Activated CD4-positive, alpha-beta T cell treated with anti-CD3 and anti-CD28 coated beads for 36 hours (primary cell): ENCODE measurements at regions of chrX and their contacts with region 1.

Region 1: DNA sequence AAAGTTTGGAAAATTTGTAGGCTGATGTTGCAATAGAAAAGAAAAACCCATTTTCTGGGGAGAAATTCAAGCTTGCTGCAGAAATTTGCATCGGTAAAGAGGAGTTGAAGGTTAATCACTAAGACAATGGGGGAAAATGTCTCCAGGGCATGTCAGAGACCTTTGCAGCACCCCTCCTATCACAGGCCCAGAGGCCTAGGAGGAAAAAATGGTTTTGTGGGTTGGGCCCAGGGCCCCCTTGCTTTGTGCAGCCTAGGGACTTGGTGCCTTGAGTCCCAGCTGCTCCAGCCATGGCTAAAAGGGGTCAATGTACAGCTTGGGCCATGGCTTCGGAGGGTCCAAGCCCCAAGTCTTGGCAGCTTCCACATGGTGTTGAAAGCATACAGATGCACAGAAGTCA is 17.8 kb downstream of the TMSB15A start:
- DNase-seq: no peak
- ATAC-seq: no peak
- H3K4me3 Mint-ChIP-seq: no peak overlapping the region
- H3K27ac Mint-ChIP-seq: no peak overlapping the region
- H3K4me1 Mint-ChIP-seq: no peaks in the 10 kb centered on the region
- H3K27me3 Mint-ChIP-seq: no peaks in the 10 kb centered on the region

Region 2: DNA sequence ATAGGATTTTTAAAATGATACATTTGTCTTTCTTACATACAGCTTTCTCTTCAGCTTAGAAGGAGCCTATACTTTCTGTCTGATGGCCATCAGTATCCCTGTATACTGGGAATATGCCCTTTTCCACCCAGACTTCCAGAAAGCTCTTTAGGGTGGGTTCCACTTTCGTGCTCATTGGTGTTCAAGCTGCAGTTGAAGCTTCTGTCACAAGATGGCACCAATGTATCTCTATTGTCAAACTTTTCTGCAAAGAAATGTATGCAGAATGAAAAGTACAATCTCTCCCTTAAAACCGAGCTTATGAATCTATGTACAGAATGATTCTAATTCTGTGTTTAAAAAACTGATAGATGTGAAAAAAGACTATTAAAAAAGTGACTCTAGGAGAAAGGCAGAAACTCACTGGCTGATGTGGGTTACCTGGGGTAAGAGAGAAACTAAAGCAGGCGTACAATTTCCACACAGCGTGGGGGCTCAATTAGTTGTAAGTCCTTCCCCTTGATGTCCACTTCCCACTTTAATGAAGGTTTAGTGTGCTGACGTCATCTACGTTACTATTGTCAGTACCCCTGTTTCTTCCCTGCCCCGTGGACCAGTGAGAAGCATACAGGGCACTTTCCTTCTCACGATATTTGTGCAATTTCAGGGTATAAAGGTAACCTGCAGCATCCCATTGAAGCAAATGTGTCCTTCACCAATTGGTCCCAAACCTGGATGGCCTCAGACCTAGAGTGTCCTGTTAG is 430.6 kb before region 1 on chrX:
- CTCF ChIA-PET with region 1: no interaction called
- POLR2A ChIA-PET with region 1: no interaction called
- intact Hi-C with region 1: loop called in 1 of 2 experiments (anchors 10 kb)
- DNase-seq: peak; percentile 21
- ATAC-seq: no peak
- H3K4me3 Mint-ChIP-seq: no peak overlapping the region
- H3K27ac Mint-ChIP-seq: no peak overlapping the region
- H3K4me1 Mint-ChIP-seq: no peaks in the 10 kb centered on the region
- H3K27me3 Mint-ChIP-seq: peaks cover 5% of the 10 kb centered on the region

Region 3: DNA sequence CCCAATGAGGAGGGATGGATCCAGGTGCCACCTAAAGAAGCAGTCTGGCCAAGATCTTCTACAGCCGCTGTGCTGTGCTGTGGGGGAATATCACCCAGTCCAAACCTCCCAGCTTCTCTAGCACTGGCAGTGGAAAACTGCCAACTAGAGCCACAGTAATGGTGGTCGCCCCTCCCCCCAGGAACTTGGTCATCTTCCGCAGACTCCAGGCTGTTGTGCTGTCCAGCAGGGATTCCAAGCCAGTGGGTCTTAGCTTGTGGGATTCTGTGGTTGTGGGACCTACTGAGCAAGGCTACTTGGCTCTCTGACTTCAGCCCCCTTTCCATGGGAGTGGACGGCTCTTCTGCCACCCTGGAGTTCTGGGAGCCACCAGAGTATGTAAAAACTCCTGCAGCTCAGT is 170.8 kb after region 1 on chrX:
- CTCF ChIA-PET with region 1: no interaction called
- POLR2A ChIA-PET with region 1: no interaction called
- intact Hi-C with region 1: no loop called
- DNase-seq: no peak
- ATAC-seq: no peak
- H3K4me3 Mint-ChIP-seq: no peak overlapping the region
- H3K27ac Mint-ChIP-seq: no peak overlapping the region
- H3K4me1 Mint-ChIP-seq: peaks cover 11% of the 10 kb centered on the region
- H3K27me3 Mint-ChIP-seq: no peaks in the 10 kb centered on the region